Activated CD4-positive, alpha-beta memory T cell treated with anti-CD3 and anti-CD28 coated beads for 36 hours (primary cell): ENCODE measurements at regions of chr3 and their contacts with region 1.

Region 1: GRCh38 chr3:129052675-129053074 is 7.9 kb upstream of the GP9 start:
- DNase-seq: no peak
- H3K4me3 Mint-ChIP-seq: no peak overlapping the region
- H3K27ac Mint-ChIP-seq: no peak overlapping the region
- H3K4me1 Mint-ChIP-seq: peaks cover 8% of the 10 kb centered on the region
- H3K27me3 Mint-ChIP-seq: no peaks in the 10 kb centered on the region

Region 2: DNA sequence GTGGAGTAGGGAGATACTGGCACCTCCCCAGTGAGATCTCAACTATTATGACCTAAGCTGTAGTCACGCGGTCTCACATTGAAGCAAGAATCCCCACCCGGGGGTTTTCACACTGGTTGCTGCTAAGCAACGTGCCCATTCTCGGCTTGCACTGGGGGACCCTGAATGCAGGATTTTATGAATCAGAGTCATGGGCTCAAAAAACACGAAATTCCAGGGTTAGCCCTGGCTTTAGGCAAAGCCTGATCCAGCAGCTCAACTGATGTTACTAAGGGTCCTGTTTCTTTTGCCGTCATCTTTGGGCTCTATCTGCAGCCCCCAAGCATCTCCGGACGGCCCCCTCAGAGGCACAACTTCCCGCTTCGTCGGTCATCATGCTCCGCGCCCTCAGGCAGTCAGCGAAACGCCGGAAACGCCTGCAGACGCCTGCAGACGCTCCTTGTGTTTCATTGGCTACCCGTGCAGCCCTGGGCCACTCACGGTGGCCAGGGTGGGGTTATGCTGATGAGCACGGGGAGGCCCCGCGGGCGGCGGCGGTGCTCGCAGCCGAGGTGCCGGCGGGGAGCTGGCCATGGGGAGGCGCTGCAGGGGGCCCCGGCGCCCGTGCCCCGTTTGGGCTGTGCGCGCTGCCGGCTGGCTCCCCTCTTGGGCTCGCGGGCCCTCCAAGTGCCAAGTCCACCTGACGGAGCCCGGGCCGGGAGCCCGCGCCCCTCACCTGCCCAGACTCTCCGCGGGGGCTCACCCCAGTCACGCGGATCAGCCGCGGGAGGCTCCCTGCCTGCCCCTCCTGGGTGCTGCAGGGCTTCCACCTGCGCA is 25.7 kb before region 1 on chr3:
- CTCF ChIA-PET with region 1: interaction called, 14 read pairs
- POLR2A ChIA-PET with region 1: no interaction called
- intact Hi-C with region 1: no loop called
- DNase-seq: peak; percentile 96
- H3K4me3 Mint-ChIP-seq: peak overlapping the region; percentile 73
- H3K27ac Mint-ChIP-seq: peak overlapping the region; percentile 83
- H3K4me1 Mint-ChIP-seq: peaks cover 9% of the 10 kb centered on the region
- H3K27me3 Mint-ChIP-seq: no peaks in the 10 kb centered on the region

Region 3: DNA sequence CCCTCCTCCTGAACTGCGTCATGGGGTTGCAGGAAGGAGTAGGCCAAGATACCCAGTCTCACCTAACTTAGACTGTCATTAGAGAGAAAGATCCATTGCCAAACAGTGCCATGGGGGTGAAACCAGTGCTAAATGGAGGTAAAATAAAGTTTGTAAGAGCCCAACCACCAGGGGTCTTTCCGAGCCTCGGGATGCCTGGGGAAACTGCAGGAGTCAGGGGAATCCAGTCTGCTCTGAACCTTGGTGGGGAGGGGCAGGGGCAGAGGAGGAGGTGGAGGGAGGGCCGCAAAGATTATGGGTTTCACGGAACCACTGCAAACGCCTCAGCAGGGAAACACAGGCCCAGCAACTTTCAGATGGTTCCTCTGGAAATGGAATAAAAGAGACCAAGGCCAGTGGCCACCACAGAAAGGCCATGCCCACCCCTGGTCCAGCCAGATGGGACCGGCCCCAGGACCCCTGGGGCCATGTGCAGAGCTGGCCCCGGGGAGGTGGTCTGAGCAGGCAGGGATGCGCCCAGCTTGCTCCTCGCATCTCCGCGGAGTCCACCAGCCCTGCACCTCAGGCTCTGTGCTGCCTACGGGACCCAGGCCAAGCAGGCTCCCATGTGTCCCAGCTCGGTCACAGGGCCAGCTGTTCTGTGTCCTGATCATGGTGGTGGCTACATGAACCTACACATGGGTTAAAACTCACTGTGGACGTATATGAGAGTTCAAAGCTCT is 11.9 kb before region 1 on chr3:
- CTCF ChIA-PET with region 1: interaction called, 11 read pairs
- POLR2A ChIA-PET with region 1: interaction called, 4 read pairs
- intact Hi-C with region 1: no loop called
- DNase-seq: no peak
- H3K4me3 Mint-ChIP-seq: no peak overlapping the region
- H3K27ac Mint-ChIP-seq: no peak overlapping the region
- H3K4me1 Mint-ChIP-seq: peaks cover 4% of the 10 kb centered on the region
- H3K27me3 Mint-ChIP-seq: peaks cover 14% of the 10 kb centered on the region

Region 4: DNA sequence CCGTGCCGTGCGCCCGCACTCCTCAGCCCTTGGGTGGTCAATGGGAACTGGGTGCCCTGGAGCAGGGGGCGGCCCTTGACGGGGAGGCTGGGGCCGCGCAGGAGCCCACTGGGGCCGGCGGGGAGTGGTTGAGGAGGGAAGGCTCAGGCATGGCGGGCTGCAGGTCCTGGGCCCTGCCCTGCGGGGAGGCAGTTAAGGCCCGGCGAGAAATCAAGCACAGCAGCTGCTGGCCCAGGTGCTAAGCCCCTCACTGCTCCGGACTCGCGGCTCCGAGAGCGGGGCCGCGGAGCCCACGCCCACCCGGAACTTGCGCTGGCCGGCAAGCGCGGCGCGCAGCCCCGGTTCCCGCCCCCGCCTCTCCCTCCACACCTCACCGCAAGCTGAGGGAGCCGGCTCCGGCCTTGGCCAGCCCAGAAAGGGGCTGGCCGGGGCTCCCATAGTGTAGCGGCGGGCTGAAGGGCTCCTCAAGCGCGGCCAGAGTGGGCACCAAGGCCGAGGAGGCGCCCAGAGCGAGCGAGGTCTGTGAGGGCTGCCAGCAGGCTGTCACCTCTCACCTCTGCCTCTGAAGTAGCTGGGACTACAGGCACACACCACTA is 15.7 kb after region 1 on chr3:
- CTCF ChIA-PET with region 1: interaction called, 50 read pairs
- POLR2A ChIA-PET with region 1: interaction called, 3 read pairs
- intact Hi-C with region 1: no loop called
- DNase-seq: peak; percentile 30
- H3K4me3 Mint-ChIP-seq: peak overlapping the region; percentile 29
- H3K27ac Mint-ChIP-seq: no peak overlapping the region
- H3K4me1 Mint-ChIP-seq: peaks cover 7% of the 10 kb centered on the region
- H3K27me3 Mint-ChIP-seq: peaks cover 5% of the 10 kb centered on the region

Region 5: GRCh38 chr3:129160891-129161859 is 108.5 kb after region 1 on chr3 and contains the start of gene ISY1:
- CTCF ChIA-PET with region 1: interaction called, 4 read pairs
- POLR2A ChIA-PET with region 1: interaction called, 6 read pairs
- intact Hi-C with region 1: loop called (anchors 1 kb)
- DNase-seq: peak; percentile 93
- H3K4me3 Mint-ChIP-seq: peak within 1 kb of the TSS; percentile 98
- H3K27ac Mint-ChIP-seq: peak within 1 kb of the TSS; percentile 100
- H3K4me1 Mint-ChIP-seq: peaks cover 31% of the 10 kb centered on the region
- H3K27me3 Mint-ChIP-seq: no peaks in the 10 kb centered on the region
- total RNA-seq, gene ISY1: 60.7 to 61.7 TPM

Region 6: DNA sequence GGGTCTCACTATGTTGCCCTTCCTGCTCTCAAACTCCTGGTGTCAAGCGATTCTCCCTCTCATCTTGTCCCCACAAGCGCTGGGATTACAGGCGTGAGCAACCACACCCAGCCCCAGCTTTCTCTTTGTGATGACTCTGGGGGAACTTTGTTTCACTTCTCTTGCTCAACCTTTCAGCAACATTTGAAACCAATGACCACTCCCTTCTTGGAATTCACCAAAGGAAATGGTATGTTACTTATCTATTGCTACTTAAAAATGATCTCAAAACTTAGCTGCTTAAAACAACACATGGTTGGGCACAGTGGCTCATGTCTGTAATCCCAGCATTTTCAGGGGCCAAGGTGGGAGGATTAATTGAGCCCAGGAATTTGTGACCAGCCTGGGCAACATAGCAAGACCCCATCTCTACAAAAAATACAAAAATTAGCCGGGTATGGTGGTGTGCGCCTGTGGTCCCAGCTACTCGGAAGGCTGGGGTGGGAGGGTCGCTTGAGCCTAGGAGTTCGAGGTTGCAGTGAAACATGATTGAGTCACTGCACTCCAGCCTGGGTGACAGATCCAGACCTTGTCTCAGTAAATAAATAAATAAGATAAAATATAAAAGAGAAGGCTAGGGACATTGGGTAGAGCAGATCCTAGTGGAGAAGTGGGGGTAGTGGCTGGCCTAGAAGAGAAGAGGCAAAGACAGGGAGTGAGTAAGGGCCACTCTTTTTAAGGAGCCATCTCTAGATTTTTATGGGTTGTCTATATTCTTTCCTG is 186.5 kb after region 1 on chr3:
- CTCF ChIA-PET with region 1: interaction called, 113 read pairs
- POLR2A ChIA-PET with region 1: no interaction called
- intact Hi-C with region 1: no loop called
- DNase-seq: peak; percentile 64
- H3K4me3 Mint-ChIP-seq: peak overlapping the region; percentile 15
- H3K27ac Mint-ChIP-seq: peak overlapping the region; percentile 81
- H3K4me1 Mint-ChIP-seq: peaks cover 20% of the 10 kb centered on the region
- H3K27me3 Mint-ChIP-seq: no peaks in the 10 kb centered on the region

Region 7: DNA sequence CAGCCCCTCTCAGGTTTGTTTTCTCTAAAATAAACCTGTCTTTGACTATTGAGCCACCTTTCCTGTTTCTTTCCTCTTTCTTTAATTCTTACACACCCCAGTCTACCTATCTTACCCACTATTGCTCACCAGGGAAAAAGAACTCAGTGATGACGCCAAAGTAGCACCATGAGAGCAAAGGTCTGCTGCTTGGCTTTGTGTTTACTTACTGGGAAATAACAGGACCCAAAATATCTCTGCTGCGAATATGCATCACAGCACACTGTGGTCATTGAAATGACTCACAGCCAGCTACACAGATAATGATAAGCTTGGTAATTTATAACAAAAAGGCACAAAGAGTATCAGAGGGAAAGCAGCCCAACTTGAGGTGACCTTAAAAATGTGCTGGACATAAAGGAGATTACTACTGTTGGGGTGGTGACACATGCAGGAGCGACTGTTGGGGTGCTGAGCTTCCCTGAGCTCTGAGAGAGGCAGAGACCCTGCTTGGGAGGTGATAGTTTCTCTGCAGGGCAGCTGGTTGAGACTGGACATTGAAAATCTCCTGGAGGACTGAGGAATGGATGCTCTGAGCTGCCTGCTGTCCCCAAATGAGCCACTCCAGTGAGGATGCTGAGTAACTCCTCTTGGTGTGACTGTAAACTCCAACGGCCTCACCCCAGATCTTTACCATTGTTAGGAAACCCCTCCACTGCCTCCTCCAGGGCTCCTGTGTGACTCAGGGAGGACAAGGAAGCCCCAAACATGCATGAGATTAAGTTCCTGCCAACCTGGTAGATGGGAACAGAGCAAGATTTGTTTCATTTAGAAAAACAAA is 361.2 kb after region 1 on chr3:
- CTCF ChIA-PET with region 1: no interaction called
- POLR2A ChIA-PET with region 1: no interaction called
- intact Hi-C with region 1: no loop called
- DNase-seq: no peak
- H3K4me3 Mint-ChIP-seq: no peak overlapping the region
- H3K27ac Mint-ChIP-seq: no peak overlapping the region
- H3K4me1 Mint-ChIP-seq: no peaks in the 10 kb centered on the region
- H3K27me3 Mint-ChIP-seq: no peaks in the 10 kb centered on the region